ENCODE measurements at regions of chr17 and their contacts with region 1.

Region 1: GRCh38 chr17:40224718-40225550 is 5.8 kb downstream of the WIPF2 start:
- DNase-seq: no peak
- H3K4me3 ChIP-seq: no peak overlapping the region
- H3K27ac ChIP-seq: no peak overlapping the region
- H3K4me1 ChIP-seq: peaks cover 3% of the 10 kb centered on the region
- H3K27me3 ChIP-seq: no peaks in the 10 kb centered on the region
- CTCF ChIP-seq: no peak
- EP300 ChIP-seq: no peak
- POLR2A ChIP-seq: no peak

Region 2: DNA sequence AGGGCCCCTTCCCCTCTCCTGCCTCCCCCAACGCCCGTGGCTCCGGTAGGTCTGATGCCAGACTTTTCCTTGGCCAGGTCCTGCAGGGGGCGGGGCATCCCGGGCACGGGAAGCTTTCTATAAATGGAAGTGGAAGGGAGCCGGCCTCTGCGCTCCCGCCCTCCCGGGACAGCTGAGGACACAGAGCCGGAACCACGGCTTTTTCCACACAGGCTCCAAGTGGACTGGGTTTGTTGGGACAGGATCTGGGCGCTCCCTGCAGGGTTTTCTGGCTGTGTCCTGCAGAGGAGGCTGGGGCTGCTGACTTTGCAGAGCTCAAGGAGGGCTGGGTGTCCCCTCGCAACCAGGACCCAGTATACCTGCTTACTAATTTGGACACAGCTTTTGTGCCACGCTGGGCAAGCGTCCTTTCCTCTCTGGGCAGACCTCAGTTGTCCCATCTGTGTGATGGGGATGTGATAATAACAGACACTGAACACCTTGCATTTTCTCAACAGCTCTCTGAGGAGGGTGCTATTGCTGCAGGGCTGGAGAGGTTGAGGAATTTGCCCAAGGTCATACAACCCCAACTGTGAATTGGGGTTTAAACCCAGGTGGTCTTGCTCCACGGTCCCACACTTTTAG is 274.7 kb after region 1 on chr17:
- intact Hi-C with region 1: loop called in 1 of 4 experiments (anchors 5 kb)
- DNase-seq: peak; percentile 82 to 90 (median 84)
- H3K4me3 ChIP-seq: no peak overlapping the region
- H3K27ac ChIP-seq: no peak overlapping the region
- H3K4me1 ChIP-seq: peaks cover 2% of the 10 kb centered on the region
- H3K27me3 ChIP-seq: no peaks in the 10 kb centered on the region
- CTCF ChIP-seq: no peak
- EP300 ChIP-seq: no peak
- POLR2A ChIP-seq: no peak

Measured in ovary (tissue), 10 donors.